ENCODE measurements at regions of chr1 and their contacts with region 1.

Region 1: GRCh38 chr1:91529856-91530255 is 29.2 kb downstream of the CDC7 start:
- DNase-seq: peak; percentile 22 to 58
- H3K4me3 ChIP-seq: no peak overlapping the region
- H3K27ac ChIP-seq: no peak overlapping the region
- H3K4me1 ChIP-seq: no peaks in the 10 kb centered on the region
- H3K27me3 ChIP-seq: no peaks in the 10 kb centered on the region
- CTCF ChIP-seq: peak; percentile 83

Region 2: GRCh38 chr1:91383456-91383855 is 146.4 kb before region 1 on chr1:
- CTCF ChIA-PET with region 1: no interaction called
- POLR2A ChIA-PET with region 1: no interaction called
- intact Hi-C with region 1: no loop called
- DNase-seq: no peak
- H3K4me3 ChIP-seq: no peak overlapping the region
- H3K27ac ChIP-seq: no peak overlapping the region
- H3K4me1 ChIP-seq: no peaks in the 10 kb centered on the region
- H3K27me3 ChIP-seq: no peaks in the 10 kb centered on the region
- CTCF ChIP-seq: no peak

Region 3: DNA sequence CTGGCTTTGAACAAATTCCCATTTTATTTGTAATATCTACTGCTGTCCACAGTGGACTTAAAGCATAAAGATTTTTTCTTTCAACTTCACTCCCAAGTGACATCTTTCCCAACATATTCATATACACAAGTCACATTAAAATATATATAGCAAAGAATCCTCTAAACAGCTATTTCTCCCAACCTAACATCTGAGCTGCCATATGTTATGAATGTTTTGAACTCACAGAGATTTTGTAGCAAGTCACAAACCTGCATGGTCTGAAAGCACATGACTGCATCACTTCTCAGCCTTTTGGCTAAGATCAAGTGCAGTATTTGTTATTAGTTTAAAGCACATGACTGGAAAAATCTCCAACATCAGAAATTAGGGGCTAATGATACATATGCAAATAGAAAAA is 117.5 kb before region 1 on chr1:
- CTCF ChIA-PET with region 1: no interaction called
- POLR2A ChIA-PET with region 1: no interaction called
- intact Hi-C with region 1: no loop called
- DNase-seq: no peak
- H3K4me3 ChIP-seq: no peak overlapping the region
- H3K27ac ChIP-seq: no peak overlapping the region
- H3K4me1 ChIP-seq: no peaks in the 10 kb centered on the region
- H3K27me3 ChIP-seq: 0 out of 2 replicates have a peak, but pooled peaks cover 2% of the 10 kb centered on the region
- CTCF ChIP-seq: no peak

Region 4: GRCh38 chr1:91582431-91582921 is 52.6 kb after region 1 on chr1:
- CTCF ChIA-PET with region 1: no interaction called
- POLR2A ChIA-PET with region 1: no interaction called
- intact Hi-C with region 1: loop called (anchors 10 kb)
- DNase-seq: peak in 1 of 2 experiments; percentile 84
- H3K4me3 ChIP-seq: no peak overlapping the region
- H3K27ac ChIP-seq: peak overlapping the region; percentile 65
- H3K4me1 ChIP-seq: peaks cover 6% of the 10 kb centered on the region
- H3K27me3 ChIP-seq: no peaks in the 10 kb centered on the region
- CTCF ChIP-seq: no peak

Region 5: DNA sequence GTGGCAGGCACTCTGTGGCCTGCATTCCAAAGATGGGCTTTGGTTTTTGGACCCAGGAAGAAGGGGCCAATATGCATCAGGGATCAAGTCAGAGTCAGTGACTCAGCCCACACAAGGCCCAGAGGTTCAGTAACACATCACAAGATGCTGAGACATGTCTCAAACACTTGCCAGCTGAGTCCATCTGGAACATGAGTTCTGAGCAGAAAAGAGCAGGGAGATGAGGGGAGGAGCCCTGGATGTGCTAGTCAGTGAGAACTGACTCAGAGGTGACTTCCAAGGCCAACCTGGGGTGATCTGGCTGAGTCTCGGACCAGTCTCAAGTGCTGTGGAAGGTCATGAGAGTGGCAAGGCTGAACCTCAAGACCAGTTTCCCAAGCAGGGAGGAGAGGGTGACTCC is 120.9 kb after region 1 on chr1:
- CTCF ChIA-PET with region 1: no interaction called
- POLR2A ChIA-PET with region 1: no interaction called
- intact Hi-C with region 1: loop called (anchors 10 kb)
- DNase-seq: peak in 1 of 2 experiments; percentile 52
- H3K4me3 ChIP-seq: no peak overlapping the region
- H3K27ac ChIP-seq: no peak overlapping the region
- H3K4me1 ChIP-seq: no peaks in the 10 kb centered on the region
- H3K27me3 ChIP-seq: no peaks in the 10 kb centered on the region
- CTCF ChIP-seq: no peak

Region 6: DNA sequence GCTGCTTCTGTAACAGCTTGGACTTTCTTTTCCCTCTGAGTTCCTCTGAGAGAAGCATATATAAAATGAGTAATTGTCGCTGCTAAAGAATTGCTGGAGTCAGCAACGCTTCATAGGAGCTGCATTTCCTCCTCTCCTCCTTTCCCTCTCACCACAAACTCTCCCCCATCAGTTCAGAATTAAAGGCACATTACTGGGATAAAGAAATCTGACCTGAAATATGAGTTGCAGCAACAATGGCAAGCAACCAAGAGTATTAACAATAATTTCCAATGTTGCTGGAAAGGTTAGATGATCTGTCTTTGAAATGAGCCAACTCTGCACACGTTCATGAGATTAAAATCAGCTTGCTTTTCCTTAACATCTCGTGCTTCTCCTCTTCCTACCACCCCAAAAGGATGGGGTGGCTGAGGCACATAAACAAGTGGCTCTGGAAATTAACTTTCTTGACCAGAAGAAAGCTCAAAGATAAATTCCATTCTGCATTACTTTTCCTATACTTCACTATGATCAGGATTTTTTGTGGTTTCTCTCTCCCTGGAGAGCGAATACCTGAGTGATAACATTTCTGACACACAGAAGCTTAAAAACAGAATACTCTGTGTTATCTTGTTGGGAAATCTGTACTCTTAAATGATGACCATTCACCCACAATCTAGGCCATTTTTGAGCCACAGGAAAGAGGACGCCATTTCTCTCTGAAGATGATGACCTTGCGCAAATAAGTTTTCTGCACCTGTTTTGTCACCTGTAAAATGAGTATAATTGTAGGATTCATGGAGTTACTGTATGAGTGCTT is 265.9 kb after region 1 on chr1:
- CTCF ChIA-PET with region 1: no interaction called
- POLR2A ChIA-PET with region 1: no interaction called
- intact Hi-C with region 1: loop called (anchors 5 kb)
- DNase-seq: peak; percentile 43 to 98
- H3K4me3 ChIP-seq: peak overlapping the region; percentile 38
- H3K27ac ChIP-seq: peak overlapping the region; percentile 80
- H3K4me1 ChIP-seq: peaks cover 35% of the 10 kb centered on the region
- H3K27me3 ChIP-seq: no peaks in the 10 kb centered on the region
- CTCF ChIP-seq: no peak

Region 7: DNA sequence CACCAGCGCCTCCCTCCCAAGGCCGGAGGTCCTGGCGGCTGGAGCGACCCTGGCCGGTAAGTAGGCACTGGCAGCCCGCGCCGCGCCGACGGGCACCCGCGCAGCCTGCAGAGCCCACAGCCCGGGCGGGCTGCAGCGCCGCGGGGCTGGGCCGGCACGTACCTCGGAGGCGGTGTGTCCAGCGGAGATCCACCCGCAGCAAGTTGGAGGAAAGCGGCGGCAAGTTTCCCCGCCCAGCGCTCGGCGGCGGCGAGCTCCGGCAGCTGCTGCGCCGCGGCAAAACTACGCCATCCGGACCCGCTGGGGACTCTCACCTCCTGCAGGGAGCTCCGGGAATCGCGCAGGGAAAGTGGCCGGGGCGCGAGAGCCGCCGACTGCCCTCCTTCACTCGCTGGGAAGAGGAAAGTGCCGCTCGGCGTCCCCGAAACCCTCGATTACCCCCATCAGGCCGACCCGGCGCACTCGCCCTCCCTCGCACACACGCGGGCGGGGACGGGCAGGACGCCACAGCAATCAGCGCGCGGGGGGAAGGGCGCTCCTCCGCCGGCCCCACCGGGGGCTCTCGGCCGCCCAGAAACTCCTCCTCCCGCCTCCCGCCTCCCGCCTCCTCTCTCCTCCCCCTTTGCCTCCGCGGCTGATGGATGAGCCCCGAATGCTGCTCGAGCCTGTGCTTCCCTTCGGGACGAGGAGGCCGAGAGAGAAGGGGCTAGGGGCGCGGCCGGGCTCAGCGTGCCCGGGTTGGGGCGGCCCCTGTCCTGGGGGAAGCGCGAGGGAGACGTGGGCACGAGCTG is 356.1 kb after region 1 on chr1 and contains the start of gene TGFBR3:
- CTCF ChIA-PET with region 1: no interaction called
- POLR2A ChIA-PET with region 1: no interaction called
- intact Hi-C with region 1: loop called (anchors 2 kb)
- DNase-seq: peak; percentile 77 to 80
- H3K4me3 ChIP-seq: peak within 1 kb of the TSS; percentile 87
- H3K27ac ChIP-seq: peak within 1 kb of the TSS; percentile 30; the same call in 1 of the 2 replicates
- H3K4me1 ChIP-seq: peaks cover 42% of the 10 kb centered on the region
- H3K27me3 ChIP-seq: no peaks in the 10 kb centered on the region
- CTCF ChIP-seq: peak; percentile 60
- total RNA-seq, gene TGFBR3: 1.6 and 2.5 TPM in 2 replicates

Region 8: DNA sequence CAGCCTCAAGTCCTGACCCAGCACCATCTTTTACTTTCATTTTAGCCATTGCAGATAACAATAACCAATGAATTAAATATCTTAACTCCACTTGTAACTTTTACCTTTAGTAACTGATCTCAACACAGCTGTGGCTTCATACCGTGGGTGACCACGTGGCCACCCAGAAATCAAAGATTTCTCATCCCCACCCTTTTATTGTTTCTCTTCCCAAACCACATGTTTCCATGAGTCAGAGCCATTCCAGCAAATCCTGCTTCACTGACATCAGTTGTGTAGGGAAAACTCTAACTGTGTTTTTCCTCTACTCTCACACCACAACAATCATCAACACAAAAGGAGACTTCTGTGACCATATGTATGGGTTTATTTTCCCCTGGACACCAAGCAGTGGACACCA is 394.3 kb after region 1 on chr1:
- CTCF ChIA-PET with region 1: no interaction called
- POLR2A ChIA-PET with region 1: no interaction called
- intact Hi-C with region 1: loop called (anchors 1 kb)
- DNase-seq: no peak
- H3K4me3 ChIP-seq: no peak overlapping the region
- H3K27ac ChIP-seq: no peak overlapping the region
- H3K4me1 ChIP-seq: peaks cover 13% of the 10 kb centered on the region
- H3K27me3 ChIP-seq: no peaks in the 10 kb centered on the region
- CTCF ChIP-seq: no peak

Region 9: GRCh38 chr1:91958964-91959363 is 429.1 kb after region 1 on chr1:
- CTCF ChIA-PET with region 1: no interaction called
- POLR2A ChIA-PET with region 1: no interaction called
- intact Hi-C with region 1: no loop called
- DNase-seq: peak in 1 of 2 experiments; percentile 44
- H3K4me3 ChIP-seq: no peak overlapping the region
- H3K27ac ChIP-seq: no peak overlapping the region
- H3K4me1 ChIP-seq: no peaks in the 10 kb centered on the region
- H3K27me3 ChIP-seq: no peaks in the 10 kb centered on the region
- CTCF ChIP-seq: no peak

Measured in PC-9 (cell line).